Dorsolateral prefrontal cortex (tissue), 120 donors: ENCODE measurements at regions of chr10 and their contacts with region 1.

Region 1: DNA sequence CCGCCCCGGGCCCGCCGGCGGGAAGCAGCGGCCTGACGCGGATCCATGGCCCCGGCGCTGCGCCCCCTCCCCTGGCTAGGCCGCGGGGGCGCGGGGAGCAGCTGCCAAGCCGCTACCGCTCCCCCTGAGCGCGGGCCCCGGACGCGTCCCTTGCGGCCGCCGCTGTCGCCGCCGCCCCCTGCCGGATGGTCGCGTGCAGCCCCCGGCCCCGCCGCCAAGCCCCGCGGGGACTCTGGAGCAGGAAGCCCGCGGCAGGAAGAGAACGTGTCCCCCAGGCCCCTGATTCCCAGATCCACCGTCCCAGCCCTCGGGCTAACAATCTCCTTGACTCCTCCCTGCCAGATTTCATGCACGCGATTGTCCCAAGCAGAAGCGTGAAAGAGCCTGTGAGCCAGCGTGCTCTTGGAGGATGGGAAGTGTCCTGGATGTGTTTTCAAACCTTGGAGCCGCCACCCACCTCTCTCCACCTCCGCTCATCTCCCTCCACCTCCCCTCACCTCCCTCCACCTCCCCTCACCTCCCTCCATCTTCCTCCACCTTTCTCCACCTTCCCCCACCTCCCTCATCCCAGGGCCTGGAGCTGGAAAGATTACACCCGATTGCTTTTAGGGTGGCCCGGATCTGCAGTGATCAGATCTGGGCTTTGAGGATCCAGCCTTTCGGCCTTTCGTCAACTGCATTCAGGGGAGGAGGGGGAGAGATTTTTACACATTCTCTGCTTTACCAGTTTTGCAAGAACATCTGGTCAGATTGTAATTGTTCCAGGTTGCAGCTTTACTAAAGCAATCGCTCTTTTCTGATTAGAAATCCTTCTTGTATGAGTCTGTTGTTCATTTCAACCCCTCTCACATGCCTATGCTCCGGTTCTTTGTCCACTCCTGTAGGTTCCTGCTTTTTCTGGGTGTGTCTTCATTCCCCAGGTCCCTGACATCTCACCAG is 570 bp upstream of the PRTFDC1 start:
- DNase-seq: peak in 8 of 10 donors; percentile 36 to 57 (median 45)
- H3K4me3 ChIP-seq: peak overlapping the region; percentile 53 to 85 (median 73)
- H3K27ac ChIP-seq: peak overlapping the region; percentile 88 to 100 (median 98)
- H3K27me3 ChIP-seq: no peaks in the 10 kb centered on the region
- CTCF ChIP-seq: peak in 48 of 56 donors; percentile 7 to 81 (median 50)

Region 2: DNA sequence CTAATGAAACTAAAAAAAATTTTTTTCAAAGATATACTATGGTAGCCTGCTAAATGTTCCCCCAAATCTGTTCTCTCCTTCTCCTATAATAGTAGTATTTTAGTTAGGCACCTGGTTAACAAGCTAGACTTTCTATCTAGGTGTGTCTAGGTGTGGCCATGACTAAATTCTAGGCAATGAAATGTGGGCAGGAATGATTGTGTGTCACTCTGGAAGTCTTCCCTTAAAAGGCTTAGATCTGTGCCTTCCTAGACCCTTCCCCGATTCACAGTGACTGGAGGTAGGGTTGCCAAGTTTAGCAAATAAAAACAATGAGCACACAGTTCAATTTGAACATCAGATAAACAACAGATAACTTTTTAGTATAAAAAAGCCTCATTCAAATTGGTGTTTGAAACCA is 221.0 kb before region 1 on chr10:
- intact Hi-C with region 1: no loop called
- DNase-seq: no peak
- H3K4me3 ChIP-seq: no peak overlapping the region
- H3K27ac ChIP-seq: no peak overlapping the region
- H3K27me3 ChIP-seq: no peaks in the 10 kb centered on the region
- CTCF ChIP-seq: no peak

Region 3: GRCh38 chr10:24784061-24784460 is 168.9 kb before region 1 on chr10:
- intact Hi-C with region 1: loop called in 1 of 2 experiments (anchors 2 kb)
- DNase-seq: peak; percentile 28 to 96 (median 89)
- H3K4me3 ChIP-seq: peak overlapping the region in 18 of 59 donors; percentile 7 to 52 (median 20)
- H3K27ac ChIP-seq: peak overlapping the region; percentile 72 to 99 (median 93)
- H3K27me3 ChIP-seq: no peaks in the 10 kb centered on the region
- CTCF ChIP-seq: peak in 6 of 56 donors; percentile 14 to 51 (median 23)

Region 4: DNA sequence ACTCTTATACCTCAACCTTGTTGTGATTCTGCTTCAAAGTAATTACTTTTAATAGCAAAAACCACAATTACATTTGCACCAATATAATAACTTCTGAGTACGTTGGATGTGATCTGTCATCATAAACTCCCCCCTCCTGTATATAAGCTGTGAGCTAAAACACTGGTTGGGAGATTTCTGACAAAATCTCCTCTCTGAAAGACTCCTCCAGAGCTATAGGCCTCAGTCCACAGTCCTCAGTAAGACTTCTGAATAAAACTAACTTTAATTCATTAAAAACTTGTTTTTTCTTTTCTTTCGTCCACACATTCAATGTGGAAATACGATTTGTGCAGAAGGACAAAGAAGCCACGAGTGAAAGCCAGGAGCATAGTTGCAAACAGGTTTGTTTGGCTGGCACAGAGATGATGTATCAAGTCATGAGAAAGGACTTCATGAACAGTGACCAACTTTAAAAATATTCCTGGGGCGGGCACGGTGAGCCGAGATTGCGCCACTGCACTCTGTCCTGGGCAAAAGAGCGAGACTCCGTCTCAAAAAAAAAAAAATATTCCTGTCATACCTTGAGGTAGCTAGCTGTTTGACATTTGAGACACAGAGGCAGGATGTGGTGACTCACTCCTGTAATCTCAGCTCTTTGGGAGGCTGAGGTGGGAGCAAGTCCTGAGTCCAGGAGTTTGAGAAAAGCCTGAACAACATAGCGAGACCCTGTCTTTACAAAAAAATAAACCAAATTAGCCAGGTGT is 138.2 kb before region 1 on chr10:
- intact Hi-C with region 1: loop called (anchors 1 to 2 kb)
- DNase-seq: no peak
- H3K4me3 ChIP-seq: no peak overlapping the region
- H3K27ac ChIP-seq: peak overlapping the region in 20 of 59 donors; percentile 6 to 100 (median 96)
- H3K27me3 ChIP-seq: no peaks in the 10 kb centered on the region
- CTCF ChIP-seq: no peak

Region 5: GRCh38 chr10:24873281-24873683 is 79.7 kb before region 1 on chr10:
- intact Hi-C with region 1: loop called in 1 of 2 experiments (anchors 5 kb)
- DNase-seq: no peak
- H3K4me3 ChIP-seq: no peak overlapping the region
- H3K27ac ChIP-seq: peak overlapping the region; percentile 36 to 95 (median 87)
- H3K27me3 ChIP-seq: no peaks in the 10 kb centered on the region
- CTCF ChIP-seq: no peak